HepG2 (cell line): ENCODE measurements at regions of chr19 and their contacts with region 1.

Region 1: DNA sequence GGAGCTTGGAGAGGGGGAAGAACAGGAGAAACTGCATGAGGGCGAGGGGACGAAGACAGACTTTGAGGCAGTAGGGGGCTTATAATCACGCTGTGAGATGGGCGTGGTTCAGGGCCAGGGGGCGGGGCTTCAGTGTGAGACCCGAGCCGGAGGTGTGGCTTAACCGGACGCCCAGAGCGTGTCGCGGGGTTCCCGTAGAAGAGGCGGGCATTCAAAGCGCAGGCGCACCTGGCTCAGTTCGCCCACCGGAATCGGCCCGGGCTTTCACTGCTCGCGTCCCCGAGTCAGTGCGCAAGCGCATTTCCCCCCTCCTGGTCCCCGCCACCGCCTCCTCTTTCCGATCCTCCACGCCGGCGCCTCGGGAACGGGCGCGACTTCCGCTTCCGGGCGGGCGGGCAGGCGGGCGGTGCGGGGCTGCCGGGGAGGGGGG is 225 bp upstream of the ZNF865 start:
- DNase-seq: peak; percentile 95
- ATAC-seq: peak; percentile 77
- H3K4me3 ChIP-seq: peak overlapping the region; percentile 51 to 85 (median 84); a peak in 4 of 6 replicates
- H3K27ac ChIP-seq: peak overlapping the region; percentile 81
- H3K4me1 ChIP-seq: peaks cover 50% of the 10 kb centered on the region
- H3K27me3 ChIP-seq: no peaks in the 10 kb centered on the region; a peak in 1 of 5 replicates
- CTCF ChIP-seq: no peak
- EP300 ChIP-seq: no peak
- POLR2A ChIP-seq: peak; percentile 66 to 72; a peak in 3 of 4 replicates
- RAD21 ChIP-seq: no peak

Region 2: DNA sequence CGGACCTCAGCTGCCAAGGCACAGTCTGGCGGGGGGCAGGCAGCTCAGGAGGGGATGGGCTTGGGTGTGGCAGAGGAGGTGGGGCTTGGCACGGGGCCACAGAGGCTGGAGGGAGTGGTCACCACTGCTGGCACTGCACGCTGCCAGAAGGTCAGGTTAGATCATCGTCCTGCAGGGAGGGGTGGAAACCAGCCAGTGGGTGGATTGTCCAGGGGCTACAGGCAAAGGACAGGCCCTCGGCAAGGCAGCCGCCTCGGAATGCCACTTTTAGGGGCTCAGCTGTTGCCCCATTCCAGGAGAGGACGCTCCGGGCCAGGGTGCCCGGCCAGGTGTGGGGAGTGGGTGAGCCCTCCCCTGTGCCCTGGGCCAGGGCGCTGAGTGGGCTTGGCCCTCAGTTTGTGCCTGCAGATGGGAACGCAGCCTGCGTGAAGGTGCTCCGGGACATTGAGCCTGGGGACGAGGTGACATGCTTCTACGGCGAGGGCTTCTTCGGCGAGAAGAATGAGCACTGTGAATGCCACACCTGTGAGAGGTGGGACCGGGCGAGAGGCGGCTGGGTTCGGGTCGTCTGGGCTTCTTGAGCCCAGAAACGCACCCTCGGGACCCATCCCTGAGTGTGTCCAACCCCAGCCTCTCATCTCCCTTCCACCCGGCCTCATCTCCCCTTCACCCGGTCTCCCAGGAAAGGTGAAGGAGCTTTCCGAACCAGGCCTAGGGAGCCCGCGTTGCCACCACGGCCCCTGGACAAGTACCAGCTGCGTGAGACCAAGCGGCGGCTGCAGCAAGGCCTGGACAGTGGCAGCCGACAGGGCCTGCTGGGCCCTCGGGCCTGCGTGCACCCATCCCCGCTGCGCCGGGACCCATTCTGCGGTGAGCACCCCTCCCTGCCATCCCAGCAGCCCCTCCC is 259.2 kb before region 1 on chr19:
- CTCF ChIA-PET with region 1: no interaction called
- POLR2A ChIA-PET with region 1: no interaction called
- in situ Hi-C with region 1: no loop called
- intact Hi-C with region 1: no loop called
- DNase-seq: no peak
- ATAC-seq: no peak
- H3K4me3 ChIP-seq: no peak overlapping the region
- H3K27ac ChIP-seq: no peak overlapping the region
- H3K4me1 ChIP-seq: peaks cover 8% of the 10 kb centered on the region
- H3K27me3 ChIP-seq: no peaks in the 10 kb centered on the region; a peak in 1 of 5 replicates
- CTCF ChIP-seq: no peak
- EP300 ChIP-seq: no peak
- POLR2A ChIP-seq: no peak
- RAD21 ChIP-seq: no peak

Region 3: DNA sequence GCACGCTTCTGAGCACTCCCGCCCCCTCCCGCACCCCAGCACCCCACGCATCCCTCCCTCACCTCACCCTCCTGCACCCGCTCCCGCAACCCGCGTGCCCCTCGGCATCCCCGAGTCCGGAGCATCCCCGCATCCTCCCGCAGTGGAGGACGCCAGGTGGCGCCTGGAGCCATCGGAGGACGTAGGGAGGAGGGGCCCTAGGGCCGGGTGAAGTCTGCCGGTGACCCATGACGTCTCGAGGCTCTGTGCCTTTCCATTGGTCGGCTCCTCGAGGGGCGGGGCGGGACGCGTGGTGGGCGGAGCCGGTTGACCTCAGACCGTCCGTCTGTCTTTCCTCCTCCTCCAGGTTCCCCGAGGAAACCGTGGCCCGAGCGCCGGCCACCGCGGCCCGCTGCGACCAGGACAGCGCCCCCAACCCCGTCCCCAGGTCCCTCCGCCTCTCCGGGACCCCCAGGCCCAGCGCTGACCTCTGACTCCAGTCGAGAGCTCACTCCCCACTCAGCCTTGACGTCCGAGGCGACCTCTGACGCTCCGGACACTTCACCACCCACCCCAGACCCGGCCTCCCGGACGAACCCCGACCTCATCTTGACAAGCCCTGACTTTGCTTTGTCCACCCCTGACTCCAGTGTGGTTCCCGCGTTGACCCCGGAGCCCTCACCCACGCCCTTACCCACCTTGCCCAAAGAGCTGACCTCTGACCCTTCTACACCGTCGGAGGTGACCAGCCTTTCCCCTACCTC is 88.2 kb before region 1 on chr19:
- CTCF ChIA-PET with region 1: interaction called, 25 read pairs
- POLR2A ChIA-PET with region 1: interaction called, 3 read pairs
- in situ Hi-C with region 1: loop called (anchors 5 kb)
- intact Hi-C with region 1: loop called (anchors 1 kb)
- DNase-seq: peak; percentile 78
- ATAC-seq: peak; percentile 97
- H3K4me3 ChIP-seq: peak overlapping the region; percentile 47 to 79 (median 68)
- H3K27ac ChIP-seq: no peak overlapping the region
- H3K4me1 ChIP-seq: peaks cover 4% of the 10 kb centered on the region; the same call in 1 of the 2 replicates
- H3K27me3 ChIP-seq: peaks cover 0 to 22% of the 10 kb centered on the region in 2 experiments; a peak in 4 of 5 replicates
- CTCF ChIP-seq: peak; percentile 100
- EP300 ChIP-seq: no peak
- POLR2A ChIP-seq: peak in 1 of 2 experiments; percentile 46; a peak in 1 of 4 replicates
- RAD21 ChIP-seq: peak; percentile 98

Region 4: GRCh38 chr19:55528030-55528803 is 77.0 kb before region 1 on chr19:
- CTCF ChIA-PET with region 1: no interaction called
- POLR2A ChIA-PET with region 1: no interaction called
- in situ Hi-C with region 1: no loop called
- intact Hi-C with region 1: no loop called
- DNase-seq: peak; percentile 30
- ATAC-seq: peak; percentile 59
- H3K4me3 ChIP-seq: no peak overlapping the region
- H3K27ac ChIP-seq: no peak overlapping the region
- H3K4me1 ChIP-seq: peaks cover 33% of the 10 kb centered on the region
- H3K27me3 ChIP-seq: no peaks in the 10 kb centered on the region
- CTCF ChIP-seq: peak; percentile 43; the same call in 1 of the 2 replicates
- EP300 ChIP-seq: no peak
- POLR2A ChIP-seq: no peak
- RAD21 ChIP-seq: no peak

Region 5: DNA sequence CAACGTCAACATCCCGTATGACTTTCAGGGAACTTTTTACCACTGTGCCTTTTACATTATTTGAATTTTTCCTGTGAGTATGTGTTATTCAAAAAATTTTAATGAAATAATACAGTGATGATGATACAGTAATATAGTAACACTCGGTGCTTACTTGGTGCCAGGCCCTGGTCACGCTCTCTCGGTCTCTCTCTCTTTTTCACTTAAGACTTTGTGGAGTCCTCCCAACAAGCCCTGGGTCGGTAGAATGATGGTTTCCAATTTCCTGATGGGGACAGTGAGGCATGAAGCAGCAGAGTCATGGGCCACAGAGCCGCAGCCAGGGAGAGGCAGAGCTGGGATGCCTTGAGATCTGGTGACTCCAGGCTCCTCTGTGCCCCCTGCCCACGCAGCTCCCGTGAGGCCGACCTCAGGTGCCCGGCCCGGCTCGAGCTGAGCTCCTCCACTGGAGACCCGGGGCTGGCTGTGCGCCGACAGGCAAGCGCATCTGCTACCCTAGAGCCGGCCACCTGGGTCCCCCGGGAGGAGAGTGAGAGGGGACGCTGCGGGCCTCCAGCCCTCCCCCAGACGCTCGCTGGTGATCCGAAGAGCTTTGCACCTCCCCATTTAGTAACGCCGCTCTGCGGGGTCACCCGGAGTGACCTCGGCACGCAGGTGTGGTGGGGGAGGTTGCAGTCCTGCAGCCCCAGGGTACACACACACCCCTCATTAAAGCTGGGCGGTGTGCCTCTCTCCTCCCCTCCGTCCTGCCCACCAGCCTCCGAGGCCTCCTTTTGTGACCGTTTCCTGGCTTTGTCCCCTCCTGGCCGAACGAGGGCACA is 55.5 kb before region 1 on chr19:
- CTCF ChIA-PET with region 1: no interaction called
- POLR2A ChIA-PET with region 1: interaction called, 18 read pairs
- in situ Hi-C with region 1: no loop called
- intact Hi-C with region 1: loop called (anchors 10 kb)
- DNase-seq: peak; percentile 64
- ATAC-seq: peak; percentile 32
- H3K4me3 ChIP-seq: peak overlapping the region; percentile 55 to 80 (median 66)
- H3K27ac ChIP-seq: peak overlapping the region; percentile 47
- H3K4me1 ChIP-seq: peaks cover 79% of the 10 kb centered on the region
- H3K27me3 ChIP-seq: no peaks in the 10 kb centered on the region; a peak in 1 of 5 replicates
- CTCF ChIP-seq: 0 out of 2 replicates have a peak, but pooled peaks have one; percentile 28
- EP300 ChIP-seq: no peak
- POLR2A ChIP-seq: no peak
- RAD21 ChIP-seq: no peak

Region 6: GRCh38 chr19:55624109-55625003 is 19.1 kb after region 1 on chr19 and contains the start of gene ZNF784:
- CTCF ChIA-PET with region 1: no interaction called
- POLR2A ChIA-PET with region 1: interaction called, 23 read pairs
- in situ Hi-C with region 1: no loop called
- intact Hi-C with region 1: no loop called
- DNase-seq: peak; percentile 82
- ATAC-seq: peak; percentile 70
- H3K4me3 ChIP-seq: peak within 1 kb of the TSS; percentile 65 to 82 (median 70)
- H3K27ac ChIP-seq: peak within 1 kb of the TSS; percentile 98
- H3K4me1 ChIP-seq: peaks cover 27% of the 10 kb centered on the region
- H3K27me3 ChIP-seq: no peaks in the 10 kb centered on the region
- CTCF ChIP-seq: peak; percentile 22; the same call in 1 of the 2 replicates
- EP300 ChIP-seq: no peak
- POLR2A ChIP-seq: peak; percentile 74 to 88
- RAD21 ChIP-seq: no peak
- total RNA-seq, gene ZNF784: 4.0 and 4.2 TPM in 2 replicates

Region 7: DNA sequence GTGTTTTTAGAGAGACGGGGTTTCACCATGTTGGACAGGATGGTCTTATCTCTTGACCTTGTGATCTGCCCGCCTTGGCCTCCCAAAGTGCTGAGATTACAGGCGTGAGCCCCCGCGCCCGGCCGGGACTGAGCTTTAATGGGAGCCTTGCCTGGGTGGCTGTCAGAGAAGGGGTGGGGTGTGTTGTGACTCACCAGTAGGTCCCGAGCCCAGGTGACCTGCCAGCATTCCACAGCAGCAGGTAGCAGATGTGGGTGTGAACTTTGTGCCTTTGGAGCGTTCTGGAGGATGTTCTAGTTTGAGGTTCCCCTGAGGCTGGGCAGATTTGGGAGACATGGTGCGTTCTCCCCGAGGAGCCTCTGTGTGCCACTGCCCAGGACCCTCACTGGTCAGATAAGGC is 62.7 kb after region 1 on chr19:
- CTCF ChIA-PET with region 1: no interaction called
- POLR2A ChIA-PET with region 1: no interaction called
- in situ Hi-C with region 1: no loop called
- intact Hi-C with region 1: no loop called
- DNase-seq: no peak
- ATAC-seq: no peak
- H3K4me3 ChIP-seq: no peak overlapping the region
- H3K27ac ChIP-seq: no peak overlapping the region
- H3K4me1 ChIP-seq: peaks cover 18% of the 10 kb centered on the region
- H3K27me3 ChIP-seq: no peaks in the 10 kb centered on the region
- CTCF ChIP-seq: no peak
- EP300 ChIP-seq: no peak
- POLR2A ChIP-seq: 0 out of 4 replicates have a peak, but pooled peaks of 1 of the 2 experiments have one; percentile 0
- RAD21 ChIP-seq: no peak

Region 8: DNA sequence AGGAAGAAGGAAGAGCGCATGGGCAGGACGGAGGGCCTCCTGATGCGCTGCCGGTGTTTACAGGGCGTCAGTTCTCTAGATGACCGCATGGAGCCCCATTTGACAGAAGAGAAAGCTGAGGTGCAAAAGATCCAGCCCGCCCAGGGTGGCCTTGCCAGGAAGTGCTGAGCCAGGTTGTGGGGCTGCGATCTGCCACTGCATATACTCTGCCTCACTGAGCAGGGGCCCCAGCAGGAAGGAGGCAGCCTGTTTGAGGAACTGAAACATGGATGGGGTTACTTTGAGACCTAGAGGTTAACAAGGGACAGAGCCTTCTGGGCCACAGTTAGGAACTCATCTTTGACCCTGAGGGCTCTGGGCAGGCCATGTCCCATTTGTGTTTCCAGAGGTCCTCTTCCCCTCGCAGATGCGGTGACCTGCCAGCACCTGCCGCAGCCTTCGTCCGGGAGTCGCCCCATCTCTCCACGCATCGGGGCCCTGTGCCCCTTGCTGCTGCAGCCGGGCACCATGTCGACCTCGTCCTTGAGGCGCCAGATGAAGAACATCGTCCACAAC is 73.0 kb after region 1 on chr19:
- CTCF ChIA-PET with region 1: no interaction called
- POLR2A ChIA-PET with region 1: no interaction called
- in situ Hi-C with region 1: no loop called
- intact Hi-C with region 1: no loop called
- DNase-seq: no peak
- ATAC-seq: no peak
- H3K4me3 ChIP-seq: peak overlapping the region in 1 of 3 experiments; percentile 89; a peak in 2 of 6 replicates
- H3K27ac ChIP-seq: peak overlapping the region; percentile 58
- H3K4me1 ChIP-seq: peaks cover 64% of the 10 kb centered on the region
- H3K27me3 ChIP-seq: no peaks in the 10 kb centered on the region; a peak in 1 of 5 replicates
- CTCF ChIP-seq: no peak
- EP300 ChIP-seq: no peak
- POLR2A ChIP-seq: 0 out of 4 replicates have a peak, but pooled peaks of 1 of the 2 experiments have one; percentile 16
- RAD21 ChIP-seq: no peak